ENCODE measurements at regions of chr20 and their contacts with region 1.

Region 1: GRCh38 chr20:58236612-58237330 is 8.3 kb upstream of the ANKRD60 start:
- DNase-seq: peak; percentile 77 to 84
- ATAC-seq: peak; percentile 89 to 94 (median 90)
- H3K4me3 ChIP-seq: peak overlapping the region; percentile 69
- H3K27ac ChIP-seq: no peak overlapping the region
- H3K4me1 ChIP-seq: no peaks in the 10 kb centered on the region
- H3K27me3 ChIP-seq: no peaks in the 10 kb centered on the region
- CTCF ChIP-seq: peak; percentile 97

Region 2: GRCh38 chr20:57869291-57869950 is 367.4 kb before region 1 on chr20:
- intact Hi-C with region 1: no loop called
- DNase-seq: no peak
- ATAC-seq: no peak
- H3K4me3 ChIP-seq: no peak overlapping the region
- H3K27ac ChIP-seq: no peak overlapping the region
- H3K4me1 ChIP-seq: no peaks in the 10 kb centered on the region
- H3K27me3 ChIP-seq: peaks cover 0 to 3% (median 0%) of the 10 kb centered on the region in 3 donors
- CTCF ChIP-seq: no peak

Region 3: GRCh38 chr20:58361481-58362205 is 124.9 kb after region 1 on chr20:
- intact Hi-C with region 1: loop called (anchors 5 to 10 kb)
- DNase-seq: peak in 1 of 2 donors; percentile 17
- ATAC-seq: no peak
- H3K4me3 ChIP-seq: no peak overlapping the region
- H3K27ac ChIP-seq: no peak overlapping the region
- H3K4me1 ChIP-seq: peaks cover 5% of the 10 kb centered on the region
- H3K27me3 ChIP-seq: no peaks in the 10 kb centered on the region
- CTCF ChIP-seq: no peak

Region 4: DNA sequence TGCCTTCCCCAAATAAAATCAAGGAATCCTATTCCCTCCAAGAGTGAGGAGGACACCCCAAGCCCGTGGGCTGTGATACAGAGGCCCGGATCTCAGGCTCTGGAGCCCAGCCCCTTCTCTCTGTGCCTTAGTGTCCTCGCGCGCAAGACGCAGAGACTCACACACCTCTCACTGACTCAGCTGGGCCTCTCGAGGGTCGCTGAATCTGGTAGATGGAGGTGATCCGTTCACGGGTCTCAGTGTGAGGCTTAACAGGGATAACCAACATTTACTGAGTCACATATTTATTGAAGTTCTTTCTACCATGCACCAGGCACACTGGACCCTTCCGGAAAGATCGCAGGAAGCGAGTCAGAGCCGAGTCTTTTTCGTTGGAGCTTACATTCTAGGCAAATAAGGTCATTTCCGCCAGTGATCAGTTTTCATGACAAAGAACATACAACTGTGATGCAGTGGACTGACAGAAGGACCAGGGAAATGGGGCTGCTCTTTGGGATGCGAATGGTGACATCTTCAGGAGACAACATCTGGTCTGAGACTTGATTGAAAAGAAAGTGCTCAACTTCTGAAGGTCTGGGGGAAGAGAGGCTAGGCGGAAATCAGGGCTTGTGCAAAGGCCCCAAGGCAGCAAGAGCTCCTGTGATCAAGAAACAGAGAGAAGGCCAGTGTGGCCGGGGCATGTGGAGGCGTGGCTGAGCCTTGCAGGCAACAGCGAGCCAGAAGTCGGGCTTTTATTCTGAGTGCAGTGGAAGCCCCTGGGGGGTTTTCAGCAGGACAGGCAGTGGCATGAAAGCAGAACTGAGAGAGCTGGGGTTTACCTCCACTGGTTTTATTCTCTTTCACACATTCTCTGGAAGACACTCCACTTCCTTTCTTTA is 221.6 kb after region 1 on chr20:
- intact Hi-C with region 1: loop called in 1 of 2 experiments (anchors 5 kb)
- DNase-seq: no peak
- ATAC-seq: no peak
- H3K4me3 ChIP-seq: no peak overlapping the region
- H3K27ac ChIP-seq: no peak overlapping the region
- H3K4me1 ChIP-seq: no peaks in the 10 kb centered on the region
- H3K27me3 ChIP-seq: no peaks in the 10 kb centered on the region
- CTCF ChIP-seq: no peak

Region 5: GRCh38 chr20:58692594-58693226 is 455.9 kb after region 1 on chr20 and contains the start of gene NPEPL1:
- intact Hi-C with region 1: loop called in 1 of 2 experiments (anchors 5 kb)
- DNase-seq: peak; percentile 83 to 84
- ATAC-seq: peak; percentile 85 to 91 (median 86)
- H3K4me3 ChIP-seq: peak within 1 kb of the TSS; percentile 72
- H3K27ac ChIP-seq: peak within 1 kb of the TSS; percentile 91
- H3K4me1 ChIP-seq: peaks cover 32% of the 10 kb centered on the region
- H3K27me3 ChIP-seq: no peaks in the 10 kb centered on the region
- CTCF ChIP-seq: peak; percentile 31
- total RNA-seq, gene NPEPL1: 29.1 to 52.3 (median 36.4) TPM

Measured in psoas muscle (tissue), 8 donors.